Psoas muscle (tissue), 8 donors: ENCODE measurements at regions of chr1 and their contacts with region 1.

Region 1: GRCh38 chr1:93453911-93454310 is 6.0 kb downstream of the FNBP1L start:
- DNase-seq: no peak
- ATAC-seq: no peak
- H3K4me3 ChIP-seq: no peak overlapping the region
- H3K27ac ChIP-seq: no peak overlapping the region
- H3K4me1 ChIP-seq: peaks cover 8% of the 10 kb centered on the region
- H3K27me3 ChIP-seq: no peaks in the 10 kb centered on the region
- CTCF ChIP-seq: no peak

Region 2: GRCh38 chr1:93528412-93528811 is 74.5 kb after region 1 on chr1:
- intact Hi-C with region 1: loop called in 1 of 2 experiments (anchors 10 kb)
- DNase-seq: no peak
- ATAC-seq: no peak
- H3K4me3 ChIP-seq: no peak overlapping the region
- H3K27ac ChIP-seq: no peak overlapping the region
- H3K4me1 ChIP-seq: no peaks in the 10 kb centered on the region
- H3K27me3 ChIP-seq: no peaks in the 10 kb centered on the region
- CTCF ChIP-seq: no peak